GM12878 (cell line): ENCODE measurements at regions of chr11 and their contacts with region 1.

Region 1: GRCh38 chr11:14907411-14908213 is 15.6 kb upstream of the CYP2R1 start:
- DNase-seq: no peak
- ATAC-seq: peak; percentile 84
- H3K4me3 ChIP-seq: no peak overlapping the region
- H3K27ac ChIP-seq: no peak overlapping the region
- H3K4me1 ChIP-seq: peaks cover 10% of the 10 kb centered on the region
- H3K27me3 ChIP-seq: no peaks in the 10 kb centered on the region
- CTCF ChIP-seq: peak; percentile 58 to 90 (median 81)
- EP300 ChIP-seq: no peak
- POLR2A ChIP-seq: no peak
- RAD21 ChIP-seq: peak; percentile 59

Region 2: DNA sequence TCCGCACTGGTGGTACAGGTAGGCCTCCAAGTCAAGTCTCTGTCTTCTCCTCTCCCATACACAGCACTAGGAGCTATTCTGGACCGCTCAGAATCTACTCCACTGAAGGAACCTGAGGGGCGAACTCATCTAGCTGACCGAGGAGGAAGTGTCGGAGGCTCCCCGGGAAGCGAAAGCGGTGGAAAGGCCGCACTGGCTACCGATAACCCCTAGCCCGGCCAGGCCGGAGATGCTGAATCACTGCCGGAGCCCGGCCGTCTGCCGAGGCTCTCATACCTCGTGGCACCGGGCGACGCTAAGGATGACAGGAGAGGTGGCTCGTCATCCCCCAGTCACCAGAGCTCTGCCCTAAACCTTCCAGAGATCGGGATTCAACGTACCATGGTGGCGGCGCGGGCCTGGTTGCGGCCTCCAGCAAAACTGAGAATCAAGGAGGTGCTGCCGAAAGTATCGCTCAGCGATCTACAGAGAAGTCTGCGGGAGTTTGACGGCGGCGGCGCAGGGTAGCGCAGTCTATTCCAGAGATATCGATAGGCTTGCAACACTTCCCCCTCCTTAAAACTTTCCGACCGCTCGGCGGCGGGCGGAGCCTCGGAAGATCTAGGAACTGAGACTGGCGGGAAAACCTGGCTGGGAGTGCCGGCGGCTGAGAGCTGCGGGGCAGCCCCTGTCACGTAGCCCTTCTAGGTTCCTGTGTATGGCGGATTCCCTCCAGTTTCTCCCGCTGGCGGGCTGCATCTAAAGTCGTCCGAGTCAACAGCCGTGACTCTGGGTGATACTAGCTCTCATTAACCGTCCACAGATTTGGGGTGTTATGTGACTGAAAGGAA is 387.5 kb before region 1 on chr11 and contains the start of gene PSMA1:
- CTCF ChIA-PET with region 1: interaction called, 3 read pairs
- POLR2A ChIA-PET with region 1: no interaction called
- RAD21 ChIA-PET with region 1: no interaction called
- SMC1A ChIA-PET with region 1: interaction called, 5 read pairs
- in situ Hi-C with region 1: loop called (anchors 5 kb)
- intact Hi-C with region 1: no loop called
- DNase-seq: peak; percentile 76
- ATAC-seq: peak; percentile 93
- H3K4me3 ChIP-seq: peak within 1 kb of the TSS; percentile 95
- H3K27ac ChIP-seq: peak within 1 kb of the TSS; percentile 89
- H3K4me1 ChIP-seq: no peaks in the 10 kb centered on the region
- H3K27me3 ChIP-seq: no peaks in the 10 kb centered on the region
- CTCF ChIP-seq: no peak
- EP300 ChIP-seq: peak in 1 of 2 experiments; percentile 42; a peak in 1 of 4 replicates
- POLR2A ChIP-seq: peak; percentile 92
- RAD21 ChIP-seq: no peak
- polyA plus RNA-seq, gene PSMA1: 611 to 678 TPM

Region 3: DNA sequence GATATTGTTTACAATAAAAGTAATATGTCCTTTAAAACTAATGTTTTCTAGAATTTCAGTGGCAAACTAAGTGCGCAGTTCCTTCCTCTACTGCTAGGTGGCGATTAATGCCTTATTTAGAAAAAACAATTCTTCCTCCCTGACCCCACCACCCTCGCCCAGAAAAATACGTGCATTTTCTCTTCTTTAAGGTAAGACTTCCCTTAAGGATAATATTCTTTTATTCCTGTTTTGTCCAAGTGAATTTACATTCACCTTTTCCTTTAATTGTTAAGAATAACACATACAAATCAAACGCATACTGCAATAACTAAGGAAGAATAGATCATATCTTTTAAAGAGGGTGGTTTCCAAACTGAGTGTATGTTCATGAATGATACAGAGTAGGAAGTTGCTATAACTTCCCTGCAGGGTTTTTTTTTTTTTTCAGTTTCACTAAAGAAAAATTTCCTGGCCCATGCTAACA is 370.4 kb before region 1 on chr11:
- CTCF ChIA-PET with region 1: interaction called, 37 read pairs
- POLR2A ChIA-PET with region 1: no interaction called
- RAD21 ChIA-PET with region 1: interaction called, 8 read pairs
- SMC1A ChIA-PET with region 1: interaction called, 11 read pairs
- in situ Hi-C with region 1: no loop called
- intact Hi-C with region 1: loop called (anchors 1 kb)
- DNase-seq: no peak
- ATAC-seq: peak; percentile 80
- H3K4me3 ChIP-seq: no peak overlapping the region
- H3K27ac ChIP-seq: no peak overlapping the region
- H3K4me1 ChIP-seq: no peaks in the 10 kb centered on the region
- H3K27me3 ChIP-seq: no peaks in the 10 kb centered on the region
- CTCF ChIP-seq: peak; percentile 69 to 88 (median 72)
- EP300 ChIP-seq: no peak
- POLR2A ChIP-seq: no peak
- RAD21 ChIP-seq: peak; percentile 76

Region 4: GRCh38 chr11:14578541-14578956 is 329.1 kb before region 1 on chr11:
- CTCF ChIA-PET with region 1: no interaction called
- POLR2A ChIA-PET with region 1: no interaction called
- RAD21 ChIA-PET with region 1: no interaction called
- SMC1A ChIA-PET with region 1: no interaction called
- in situ Hi-C with region 1: no loop called
- intact Hi-C with region 1: no loop called
- DNase-seq: peak; percentile 65
- ATAC-seq: peak; percentile 96
- H3K4me3 ChIP-seq: no peak overlapping the region
- H3K27ac ChIP-seq: no peak overlapping the region
- H3K4me1 ChIP-seq: peaks cover 5% of the 10 kb centered on the region
- H3K27me3 ChIP-seq: no peaks in the 10 kb centered on the region
- CTCF ChIP-seq: no peak
- EP300 ChIP-seq: peak; percentile 79 to 81; a peak in 3 of 4 replicates
- POLR2A ChIP-seq: no peak
- RAD21 ChIP-seq: no peak

Region 5: DNA sequence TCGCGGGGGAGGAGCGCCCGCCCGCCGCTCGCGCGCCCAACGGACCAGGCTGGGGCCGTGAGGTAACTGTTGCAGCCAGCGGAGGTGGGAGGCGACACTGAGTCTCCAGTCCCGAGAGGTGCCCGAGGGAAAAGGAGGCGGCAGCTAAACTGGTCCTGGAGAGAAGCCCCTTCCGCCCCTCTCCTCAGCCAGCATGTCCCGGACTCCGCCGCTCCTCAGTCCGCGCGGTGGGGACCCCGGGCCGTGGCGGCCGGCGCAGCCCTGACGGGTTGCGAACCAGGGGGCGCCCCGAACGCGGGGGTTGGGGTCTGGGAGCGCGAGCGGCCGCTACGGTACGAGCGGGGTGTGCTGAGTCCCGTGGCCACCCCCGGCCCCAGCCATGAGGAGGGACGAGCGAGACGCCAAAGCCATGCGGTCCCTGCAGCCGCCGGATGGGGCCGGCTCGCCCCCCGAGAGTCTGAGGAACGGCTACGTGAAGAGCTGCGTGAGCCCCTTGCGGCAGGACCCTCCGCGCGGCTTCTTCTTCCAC is 263.9 kb before region 1 on chr11 and contains the start of gene PDE3B:
- CTCF ChIA-PET with region 1: interaction called, 7 read pairs
- POLR2A ChIA-PET with region 1: no interaction called
- RAD21 ChIA-PET with region 1: no interaction called
- SMC1A ChIA-PET with region 1: no interaction called
- in situ Hi-C with region 1: no loop called
- intact Hi-C with region 1: loop called (anchors 5 kb)
- DNase-seq: no peak
- ATAC-seq: peak; percentile 56
- H3K4me3 ChIP-seq: peak within 1 kb of the TSS; percentile 61
- H3K27ac ChIP-seq: no peak within 1 kb of the TSS
- H3K4me1 ChIP-seq: no peaks in the 10 kb centered on the region
- H3K27me3 ChIP-seq: peaks cover 0 to 6% of the 10 kb centered on the region in 2 experiments; a peak in 3 of 4 replicates
- CTCF ChIP-seq: no peak
- EP300 ChIP-seq: no peak
- POLR2A ChIP-seq: peak; percentile 65
- RAD21 ChIP-seq: no peak
- polyA plus RNA-seq, gene PDE3B: 0.40 to 0.77 TPM

Region 6: GRCh38 chr11:14789879-14790484 is 117.6 kb before region 1 on chr11:
- CTCF ChIA-PET with region 1: interaction called, 100 read pairs
- POLR2A ChIA-PET with region 1: no interaction called
- RAD21 ChIA-PET with region 1: interaction called, 38 read pairs
- SMC1A ChIA-PET with region 1: interaction called, 32 read pairs
- in situ Hi-C with region 1: loop called (anchors 5 kb)
- intact Hi-C with region 1: loop called (anchors 1 kb)
- DNase-seq: no peak
- ATAC-seq: no peak
- H3K4me3 ChIP-seq: no peak overlapping the region
- H3K27ac ChIP-seq: no peak overlapping the region
- H3K4me1 ChIP-seq: no peaks in the 10 kb centered on the region
- H3K27me3 ChIP-seq: no peaks in the 10 kb centered on the region
- CTCF ChIP-seq: peak in 2 of 3 experiments; percentile 21 to 27; a peak in 3 of 6 replicates
- EP300 ChIP-seq: no peak
- POLR2A ChIP-seq: no peak
- RAD21 ChIP-seq: peak; percentile 46

Region 7: GRCh38 chr11:15006139-15006759 is 98.6 kb after region 1 on chr11:
- CTCF ChIA-PET with region 1: interaction called, 59 read pairs
- POLR2A ChIA-PET with region 1: no interaction called
- RAD21 ChIA-PET with region 1: interaction called, 13 read pairs
- SMC1A ChIA-PET with region 1: interaction called, 21 read pairs
- in situ Hi-C with region 1: no loop called
- intact Hi-C with region 1: loop called (anchors 1 kb)
- DNase-seq: peak; percentile 0
- ATAC-seq: peak; percentile 86
- H3K4me3 ChIP-seq: no peak overlapping the region
- H3K27ac ChIP-seq: no peak overlapping the region
- H3K4me1 ChIP-seq: no peaks in the 10 kb centered on the region
- H3K27me3 ChIP-seq: no peaks in the 10 kb centered on the region; a peak in 1 of 4 replicates
- CTCF ChIP-seq: peak; percentile 33 to 53 (median 50); a peak in 5 of 6 replicates
- EP300 ChIP-seq: no peak
- POLR2A ChIP-seq: no peak
- RAD21 ChIP-seq: peak; percentile 49

Region 8: GRCh38 chr11:15208378-15209222 is 301.0 kb after region 1 on chr11:
- CTCF ChIA-PET with region 1: interaction called, 12 read pairs
- POLR2A ChIA-PET with region 1: no interaction called
- RAD21 ChIA-PET with region 1: no interaction called
- SMC1A ChIA-PET with region 1: interaction called, 6 read pairs
- in situ Hi-C with region 1: no loop called
- intact Hi-C with region 1: loop called (anchors 1 kb)
- DNase-seq: no peak
- ATAC-seq: peak; percentile 100
- H3K4me3 ChIP-seq: no peak overlapping the region
- H3K27ac ChIP-seq: no peak overlapping the region
- H3K4me1 ChIP-seq: no peaks in the 10 kb centered on the region
- H3K27me3 ChIP-seq: no peaks in the 10 kb centered on the region
- CTCF ChIP-seq: peak; percentile 84 to 97 (median 92)
- EP300 ChIP-seq: no peak
- POLR2A ChIP-seq: no peak
- RAD21 ChIP-seq: peak; percentile 92